ENCODE measurements at regions of chr7 and their contacts with region 1.

Region 1: DNA sequence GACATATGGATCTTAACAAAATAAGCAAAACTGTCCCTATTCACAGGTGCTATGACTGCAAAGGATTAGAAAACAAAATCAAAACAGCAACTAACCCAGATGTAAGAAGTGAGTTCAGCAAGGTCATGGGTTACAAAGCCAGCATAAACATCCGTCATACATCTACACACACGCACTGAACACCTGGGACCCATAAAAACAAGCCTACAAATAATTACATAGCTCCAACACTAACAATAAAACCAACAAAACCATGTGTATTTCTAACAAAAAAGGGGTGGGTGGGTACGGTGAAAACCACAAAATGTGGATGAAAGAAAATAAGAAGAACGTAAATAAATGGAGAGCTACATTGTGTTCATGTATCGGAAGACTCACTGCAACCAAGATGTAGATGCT is 256.8 kb downstream of the ELFN1 start:
- DNase-seq: no peak
- ATAC-seq: no peak
- H3K4me3 Mint-ChIP-seq: peak overlapping the region; percentile 3
- H3K27ac Mint-ChIP-seq: no peak overlapping the region
- H3K4me1 Mint-ChIP-seq: peaks cover 51% of the 10 kb centered on the region
- H3K27me3 Mint-ChIP-seq: no peaks in the 10 kb centered on the region
- CTCF ChIP-seq: no peak

Region 2: DNA sequence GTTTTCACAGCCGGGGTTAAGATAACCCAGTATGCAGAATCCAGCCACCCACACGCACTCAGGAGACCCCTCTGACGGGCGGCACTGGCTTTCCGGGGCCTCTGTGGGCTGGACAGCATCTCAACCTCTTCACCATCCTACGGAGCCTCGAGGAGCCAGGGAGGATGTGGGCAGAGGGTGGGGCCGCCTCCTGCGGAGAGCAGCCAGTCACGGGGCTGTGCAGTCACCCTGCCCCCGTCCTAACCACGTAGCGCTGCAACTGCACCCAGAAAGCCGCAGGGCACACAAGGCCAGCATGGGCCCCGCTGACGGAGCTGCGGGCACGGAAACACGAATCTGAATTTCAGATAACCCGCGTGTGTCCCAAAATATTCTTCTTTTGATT is 13.5 kb after region 1 on chr7:
- CTCF ChIA-PET with region 1: interaction called, 3 read pairs
- POLR2A ChIA-PET with region 1: interaction called, 4 read pairs
- intact Hi-C with region 1: loop called (anchors 1 kb)
- DNase-seq: peak; percentile 70
- ATAC-seq: peak; percentile 97
- H3K4me3 Mint-ChIP-seq: peak overlapping the region; percentile 84
- H3K27ac Mint-ChIP-seq: peak overlapping the region; percentile 91
- H3K4me1 Mint-ChIP-seq: peaks cover 41% of the 10 kb centered on the region
- H3K27me3 Mint-ChIP-seq: no peaks in the 10 kb centered on the region
- CTCF ChIP-seq: no peak